ENCODE measurements at regions of chr5 and their contacts with region 1.

Region 1: DNA sequence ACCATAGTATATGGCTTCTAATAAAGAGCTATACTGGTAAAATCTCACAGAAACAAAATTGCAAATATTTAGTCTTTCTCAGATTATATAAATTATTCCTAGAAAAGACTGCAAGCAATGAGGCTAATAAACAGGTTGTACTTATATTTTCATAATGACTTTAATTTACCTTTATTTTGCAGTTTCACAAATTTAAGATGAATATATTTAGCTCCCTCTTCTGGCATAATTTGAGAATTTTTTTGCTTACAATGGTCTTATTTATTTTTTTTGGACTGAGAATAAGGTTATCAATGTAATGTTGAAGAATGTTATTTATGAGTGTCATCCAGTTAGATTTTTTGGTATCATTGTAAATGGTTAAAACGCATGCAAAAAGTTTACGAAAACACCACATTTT is 56.7 kb downstream of the PIK3R1 start:
- DNase-seq: no peak
- ATAC-seq: no peak

Region 2: GRCh38 chr5:67246108-67246507 is 1026.2 kb before region 1 on chr5:
- intact Hi-C with region 1: loop called (anchors 10 kb)
- DNase-seq: no peak
- ATAC-seq: peak; percentile 62

Region 3: DNA sequence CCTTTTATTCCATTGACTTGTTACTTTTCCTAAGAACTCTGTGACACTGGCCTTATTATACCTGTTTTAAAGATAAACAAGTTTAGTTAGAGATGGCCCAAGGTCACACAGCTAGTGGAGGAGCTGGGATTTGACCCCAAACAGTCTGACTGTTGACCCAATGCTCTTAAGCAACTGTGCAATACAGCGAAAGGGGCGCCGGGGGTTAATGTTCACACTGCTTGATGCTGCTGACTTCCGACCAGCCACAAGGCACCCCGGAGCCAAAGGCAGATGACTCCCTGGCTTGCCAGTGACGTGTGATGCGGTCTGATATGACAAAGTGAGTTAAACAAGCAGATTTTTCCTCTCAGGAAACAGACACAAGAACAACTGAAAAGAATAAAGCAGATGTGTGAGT is 32.8 kb before region 1 on chr5:
- intact Hi-C with region 1: no loop called
- DNase-seq: peak; percentile 76
- ATAC-seq: peak; percentile 62